Panc1 (cell line): ENCODE measurements at regions of chr15 and their contacts with region 1.

Region 1: GRCh38 chr15:91884604-91885003 is 31.1 kb downstream of the SLCO3A1 start:
- DNase-seq: no peak
- ATAC-seq: no peak
- H3K4me3 ChIP-seq: no peak overlapping the region
- H3K27ac ChIP-seq: no peak overlapping the region
- H3K4me1 ChIP-seq: no peaks in the 10 kb centered on the region; the same call in 1 of the 2 replicates
- H3K27me3 ChIP-seq: no peaks in the 10 kb centered on the region
- CTCF ChIP-seq: no peak

Region 2: DNA sequence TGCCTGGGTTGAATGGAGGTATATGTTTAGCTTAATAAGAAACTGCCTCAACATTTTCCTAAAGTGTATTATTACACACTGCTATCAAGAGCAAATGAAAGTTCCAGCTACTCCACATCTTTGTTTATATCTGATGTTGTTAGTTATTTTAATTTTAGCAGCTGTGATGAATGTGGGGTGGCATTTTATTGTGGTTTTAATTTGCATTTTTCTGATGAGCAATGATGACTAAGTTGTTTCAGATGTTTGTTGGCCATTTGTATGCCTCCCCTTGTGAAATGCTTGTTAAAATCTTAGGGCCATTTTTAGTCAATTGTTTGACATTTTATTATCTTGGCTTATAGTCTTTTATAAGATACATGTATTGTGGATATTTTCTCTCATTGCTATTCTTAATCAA is 291.5 kb before region 1 on chr15:
- CTCF ChIA-PET with region 1: interaction called, 10 read pairs
- POLR2A ChIA-PET with region 1: no interaction called
- in situ Hi-C with region 1: no loop called
- intact Hi-C with region 1: no loop called
- DNase-seq: no peak
- ATAC-seq: no peak
- H3K4me3 ChIP-seq: no peak overlapping the region
- H3K27ac ChIP-seq: no peak overlapping the region
- H3K4me1 ChIP-seq: no peaks in the 10 kb centered on the region
- H3K27me3 ChIP-seq: no peaks in the 10 kb centered on the region
- CTCF ChIP-seq: no peak

Region 3: GRCh38 chr15:91908391-91908790 is 23.8 kb after region 1 on chr15:
- CTCF ChIA-PET with region 1: no interaction called
- POLR2A ChIA-PET with region 1: interaction called, 21 read pairs
- in situ Hi-C with region 1: no loop called
- intact Hi-C with region 1: no loop called
- DNase-seq: no peak
- ATAC-seq: no peak
- H3K4me3 ChIP-seq: no peak overlapping the region
- H3K27ac ChIP-seq: no peak overlapping the region
- H3K4me1 ChIP-seq: no peaks in the 10 kb centered on the region
- H3K27me3 ChIP-seq: no peaks in the 10 kb centered on the region
- CTCF ChIP-seq: no peak